ENCODE measurements at regions of chr3 and their contacts with region 1.

Region 1: DNA sequence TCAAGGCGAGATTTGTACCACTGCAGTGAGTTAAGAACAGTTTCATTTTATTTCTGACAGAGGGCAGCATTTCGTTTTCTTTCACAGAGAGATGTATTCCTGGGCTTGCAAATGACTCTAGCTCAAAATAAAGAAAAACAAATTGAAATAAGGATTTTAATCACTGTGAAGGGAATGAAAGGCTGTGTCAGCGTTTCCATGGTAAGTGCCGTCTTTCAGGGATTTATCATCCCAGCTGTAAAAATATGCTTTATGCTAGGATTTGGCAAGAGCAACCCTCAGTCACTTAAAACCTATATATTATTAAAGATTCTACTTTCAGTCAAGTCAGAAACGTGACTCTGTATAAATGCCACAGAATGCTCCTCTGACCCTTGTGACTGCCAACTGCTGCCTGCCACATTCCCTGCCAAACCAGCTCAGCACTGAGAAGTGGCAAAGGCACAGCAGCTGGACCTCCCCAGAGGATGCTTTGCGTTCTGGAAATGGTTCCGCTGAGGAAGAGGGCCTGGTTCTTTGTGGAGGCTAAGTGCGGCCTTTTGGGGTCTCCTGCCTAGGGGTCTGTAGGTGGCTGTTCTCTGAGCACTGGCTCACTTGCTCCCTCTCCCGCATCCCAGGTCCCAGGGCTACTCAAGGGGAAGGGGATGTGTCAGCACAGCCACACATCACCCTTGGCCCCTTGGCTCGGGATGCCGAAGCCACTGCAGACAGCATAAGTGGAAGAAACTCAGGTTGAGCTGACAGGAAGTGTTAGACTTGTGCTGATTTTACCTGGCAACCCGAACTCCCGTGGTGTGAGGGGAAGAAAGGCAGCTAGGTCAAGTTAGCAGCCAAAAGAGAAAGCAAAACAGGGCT is 56.6 kb upstream of the POMGNT2 start:
- DNase-seq: peak; percentile 66 to 79 (median 78)
- H3K4me3 ChIP-seq: peak overlapping the region; percentile 12 to 47
- H3K4me3 Mint-ChIP-seq: peak overlapping the region; percentile 80 to 92 (median 86)
- H3K27ac ChIP-seq: peak overlapping the region; percentile 60
- H3K27ac Mint-ChIP-seq: peak overlapping the region; percentile 92 to 100 (median 99)
- H3K4me1 ChIP-seq: peaks cover 27% of the 10 kb centered on the region
- H3K4me1 Mint-ChIP-seq: peaks cover 20 to 32% (median 27%) of the 10 kb centered on the region in 4 donors
- H3K27me3 ChIP-seq: no peaks in the 10 kb centered on the region
- H3K27me3 Mint-ChIP-seq: no peaks in the 10 kb centered on the region

Region 2: DNA sequence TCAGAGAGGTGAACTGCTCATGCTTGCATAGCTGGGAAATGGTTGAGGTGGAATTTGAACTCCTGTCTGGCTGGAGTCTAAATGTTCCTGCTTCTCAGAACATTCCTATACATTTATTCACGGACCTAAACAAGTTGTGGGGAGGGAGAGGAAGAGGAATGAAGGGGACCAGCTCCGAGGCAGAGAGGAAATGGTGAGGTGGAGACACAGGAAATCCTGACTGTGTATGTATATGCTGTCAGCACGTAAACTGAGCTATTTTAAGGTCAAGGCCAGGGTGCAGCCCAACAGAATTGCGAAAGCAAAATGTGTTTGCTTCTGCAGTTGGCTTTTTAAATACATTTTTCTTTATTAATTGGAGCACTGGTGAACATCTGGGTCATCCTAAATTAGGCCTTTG is 17.6 kb after region 1 on chr3:
- CTCF ChIA-PET with region 1: interaction called, 49 read pairs
- POLR2A ChIA-PET with region 1: interaction called, 74 read pairs
- intact Hi-C with region 1: loop called (anchors 1 kb)
- DNase-seq: peak; percentile 51 to 69 (median 65)
- H3K4me3 ChIP-seq: peak overlapping the region in 1 of 2 donors; percentile 20
- H3K4me3 Mint-ChIP-seq: peak overlapping the region; percentile 52 to 87 (median 78)
- H3K27ac ChIP-seq: peak overlapping the region; percentile 27
- H3K27ac Mint-ChIP-seq: peak overlapping the region; percentile 83 to 98 (median 95)
- H3K4me1 ChIP-seq: peaks cover 46% of the 10 kb centered on the region
- H3K4me1 Mint-ChIP-seq: peaks cover 40 to 72% (median 63%) of the 10 kb centered on the region in 4 donors
- H3K27me3 ChIP-seq: no peaks in the 10 kb centered on the region
- H3K27me3 Mint-ChIP-seq: no peaks in the 10 kb centered on the region

Region 3: GRCh38 chr3:43198791-43199644 is 36.6 kb after region 1 on chr3:
- CTCF ChIA-PET with region 1: interaction called, 41 read pairs
- POLR2A ChIA-PET with region 1: interaction called, 51 read pairs
- intact Hi-C with region 1: loop called (anchors 1 kb)
- DNase-seq: no peak
- H3K4me3 ChIP-seq: no peak overlapping the region
- H3K4me3 Mint-ChIP-seq: no peak overlapping the region
- H3K27ac ChIP-seq: no peak overlapping the region
- H3K27ac Mint-ChIP-seq: peak overlapping the region in 1 of 7 donors; percentile 19
- H3K4me1 ChIP-seq: peaks cover 44% of the 10 kb centered on the region
- H3K4me1 Mint-ChIP-seq: peaks cover 50 to 59% (median 51%) of the 10 kb centered on the region in 4 donors
- H3K27me3 ChIP-seq: no peaks in the 10 kb centered on the region
- H3K27me3 Mint-ChIP-seq: peaks cover 0 to 2% of the 10 kb centered on the region in 2 donors

Region 4: DNA sequence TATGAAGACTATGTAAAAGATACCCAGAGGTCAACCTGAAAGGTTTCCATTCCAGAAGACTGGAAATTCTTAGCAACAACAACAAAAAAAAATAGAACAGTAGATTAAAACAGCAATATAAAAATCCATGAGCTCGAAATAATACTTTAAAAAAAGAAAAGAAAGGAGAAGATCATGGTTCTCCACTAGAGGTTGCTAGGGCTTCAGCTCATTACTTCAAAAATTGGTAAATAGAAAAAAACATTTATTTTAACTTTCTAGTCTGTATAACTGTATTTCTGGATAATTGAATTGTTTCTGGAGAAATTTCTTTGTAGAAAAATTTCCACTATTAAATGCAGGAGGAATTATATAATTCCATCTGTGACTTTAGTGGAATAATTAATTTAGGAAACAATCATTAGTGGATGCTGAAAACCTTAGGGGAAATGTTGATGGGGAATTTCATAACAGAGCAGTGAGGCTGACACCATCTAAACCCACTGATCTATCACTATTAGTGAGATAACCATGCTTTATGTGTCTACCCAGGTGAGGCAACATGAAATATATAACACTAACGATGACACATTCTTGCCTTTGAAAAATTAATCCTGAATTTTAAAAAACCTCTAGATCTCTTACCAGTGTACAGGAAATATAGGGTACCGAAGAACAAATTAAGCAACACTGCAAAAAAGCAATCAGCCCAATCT is 61.4 kb after region 1 on chr3:
- CTCF ChIA-PET with region 1: interaction called, 42 read pairs
- POLR2A ChIA-PET with region 1: interaction called, 6 read pairs
- intact Hi-C with region 1: loop called (anchors 1 kb)
- DNase-seq: peak in 4 of 5 donors; percentile 14 to 30 (median 24)
- H3K4me3 ChIP-seq: no peak overlapping the region
- H3K4me3 Mint-ChIP-seq: peak overlapping the region in 2 of 8 donors; percentile 18 to 55
- H3K27ac ChIP-seq: no peak overlapping the region
- H3K27ac Mint-ChIP-seq: peak overlapping the region in 3 of 7 donors; percentile 6 to 52 (median 38)
- H3K4me1 ChIP-seq: peaks cover 43% of the 10 kb centered on the region
- H3K4me1 Mint-ChIP-seq: peaks cover 35 to 53% (median 48%) of the 10 kb centered on the region in 4 donors
- H3K27me3 ChIP-seq: no peaks in the 10 kb centered on the region
- H3K27me3 Mint-ChIP-seq: no peaks in the 10 kb centered on the region

Region 5: GRCh38 chr3:43345877-43346276 is 183.4 kb after region 1 on chr3:
- CTCF ChIA-PET with region 1: interaction called, 27 read pairs
- POLR2A ChIA-PET with region 1: interaction called, 20 read pairs
- intact Hi-C with region 1: no loop called
- DNase-seq: no peak
- H3K4me3 ChIP-seq: no peak overlapping the region
- H3K4me3 Mint-ChIP-seq: peak overlapping the region in 7 of 8 donors; percentile 23 to 76 (median 61)
- H3K27ac ChIP-seq: no peak overlapping the region
- H3K27ac Mint-ChIP-seq: peak overlapping the region; percentile 90 to 98 (median 95)
- H3K4me1 ChIP-seq: peaks cover 84% of the 10 kb centered on the region
- H3K4me1 Mint-ChIP-seq: peaks cover 52 to 84% (median 68%) of the 10 kb centered on the region in 4 donors
- H3K27me3 ChIP-seq: no peaks in the 10 kb centered on the region
- H3K27me3 Mint-ChIP-seq: no peaks in the 10 kb centered on the region

Region 6: DNA sequence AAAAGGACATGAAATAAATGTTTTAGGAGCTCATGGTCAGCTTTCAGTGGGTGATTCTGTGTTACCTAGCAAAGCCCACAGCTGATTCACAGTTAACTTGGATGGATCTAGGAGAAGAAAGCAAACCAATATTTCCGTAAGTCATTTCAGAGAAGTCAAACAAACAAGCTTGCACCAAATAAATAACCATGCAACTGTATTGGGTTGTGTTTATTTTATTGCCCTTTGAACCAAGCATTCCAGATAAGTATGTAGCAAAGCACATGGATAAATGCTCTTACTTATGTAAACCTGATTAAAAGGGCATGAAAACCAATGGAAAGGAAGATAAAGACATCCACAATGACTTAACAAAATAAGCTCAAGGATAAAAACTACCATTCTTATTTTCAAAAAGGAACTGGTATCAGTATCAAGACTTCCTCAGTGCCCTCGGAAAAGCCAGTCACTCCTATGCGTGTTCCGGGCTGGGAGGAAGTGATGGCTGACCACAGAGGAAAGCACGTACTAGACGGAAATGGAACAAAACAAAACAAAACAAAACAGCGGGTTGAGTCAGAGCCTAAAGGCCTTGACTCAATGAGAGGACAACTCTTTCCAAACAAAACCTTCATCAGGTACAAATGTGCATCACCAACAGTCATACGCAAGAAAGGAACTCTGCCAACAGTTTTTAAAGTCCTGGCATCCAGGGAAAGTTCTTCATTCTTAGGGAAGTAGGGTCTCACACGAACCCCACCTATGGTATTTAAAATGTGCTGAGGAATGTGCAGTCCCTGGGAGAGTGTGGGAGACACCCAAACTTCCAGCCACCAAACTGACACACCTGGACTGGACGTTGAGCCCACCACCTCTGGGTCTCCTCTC is 227.2 kb after region 1 on chr3:
- CTCF ChIA-PET with region 1: interaction called, 13 read pairs
- POLR2A ChIA-PET with region 1: interaction called, 8 read pairs
- intact Hi-C with region 1: no loop called
- DNase-seq: peak; percentile 84 to 92 (median 87)
- H3K4me3 ChIP-seq: peak overlapping the region in 1 of 2 donors; percentile 48
- H3K4me3 Mint-ChIP-seq: peak overlapping the region; percentile 60 to 81 (median 68)
- H3K27ac ChIP-seq: peak overlapping the region; percentile 64
- H3K27ac Mint-ChIP-seq: peak overlapping the region; percentile 85 to 98 (median 96)
- H3K4me1 ChIP-seq: peaks cover 61% of the 10 kb centered on the region
- H3K4me1 Mint-ChIP-seq: peaks cover 66 to 97% (median 79%) of the 10 kb centered on the region in 4 donors
- H3K27me3 ChIP-seq: no peaks in the 10 kb centered on the region
- H3K27me3 Mint-ChIP-seq: no peaks in the 10 kb centered on the region

Region 7: GRCh38 chr3:43503067-43503728 is 340.7 kb after region 1 on chr3:
- CTCF ChIA-PET with region 1: interaction called, 155 read pairs
- POLR2A ChIA-PET with region 1: interaction called, 28 read pairs
- intact Hi-C with region 1: loop called (anchors 1 kb)
- DNase-seq: peak in 4 of 5 donors; percentile 54 to 61 (median 60)
- H3K4me3 ChIP-seq: no peak overlapping the region
- H3K4me3 Mint-ChIP-seq: no peak overlapping the region
- H3K27ac ChIP-seq: no peak overlapping the region
- H3K27ac Mint-ChIP-seq: peak overlapping the region in 5 of 7 donors; percentile 24 to 88 (median 63)
- H3K4me1 ChIP-seq: peaks cover 39% of the 10 kb centered on the region
- H3K4me1 Mint-ChIP-seq: peaks cover 32 to 52% (median 41%) of the 10 kb centered on the region in 4 donors
- H3K27me3 ChIP-seq: no peaks in the 10 kb centered on the region
- H3K27me3 Mint-ChIP-seq: no peaks in the 10 kb centered on the region